Right lobe of liver (tissue), 6 donors: ENCODE measurements at regions of chr9 and their contacts with region 1.

Region 1: GRCh38 chr9:113581865-113582697 is 118.6 kb downstream of the RGS3 start:
- DNase-seq: peak; percentile 76 to 81 (median 78)
- ATAC-seq: peak; percentile 72 to 75 (median 74)
- H3K4me3 ChIP-seq: peak overlapping the region in 1 of 3 donors; percentile 14
- H3K27ac ChIP-seq: peak overlapping the region; percentile 10 to 75 (median 52)
- H3K4me1 ChIP-seq: peaks cover 0 to 29% (median 12%) of the 10 kb centered on the region in 4 donors
- H3K27me3 ChIP-seq: no peaks in the 10 kb centered on the region
- CTCF ChIP-seq: peak; percentile 28 to 34 (median 30)
- POLR2A ChIP-seq: no peak

Region 2: GRCh38 chr9:113523421-113524236 is 58.5 kb before region 1 on chr9:
- intact Hi-C with region 1: loop called in 1 of 2 experiments (anchors 10 kb)
- DNase-seq: peak; percentile 50 to 70 (median 61)
- ATAC-seq: peak; percentile 62 to 85 (median 78)
- H3K4me3 ChIP-seq: no peak overlapping the region
- H3K27ac ChIP-seq: peak overlapping the region in 1 of 3 donors; percentile 5
- H3K4me1 ChIP-seq: peaks cover 0 to 8% (median 0%) of the 10 kb centered on the region in 4 donors
- H3K27me3 ChIP-seq: no peaks in the 10 kb centered on the region
- CTCF ChIP-seq: no peak
- POLR2A ChIP-seq: no peak